HCT116 (cell line): ENCODE measurements at regions of chr7 and their contacts with region 1.

Region 1: GRCh38 chr7:65216459-65216858 is 157.2 kb upstream of the ZNF92 start:
- DNase-seq: peak; percentile 48
- ATAC-seq: peak; percentile 94
- H3K4me3 ChIP-seq: no peak overlapping the region
- H3K27ac ChIP-seq: no peak overlapping the region
- H3K4me1 ChIP-seq: no peaks in the 10 kb centered on the region
- H3K27me3 ChIP-seq: no peaks in the 10 kb centered on the region
- CTCF ChIP-seq: peak; percentile 68 to 78 (median 71)
- POLR2A ChIP-seq: no peak
- RAD21 ChIP-seq: peak; percentile 88

Region 2: GRCh38 chr7:64951250-64951848 is 265.1 kb before region 1 on chr7:
- CTCF ChIA-PET with region 1: no interaction called
- POLR2A ChIA-PET with region 1: no interaction called
- RAD21 ChIA-PET with region 1: no interaction called
- intact Hi-C with region 1: loop called (anchors 1 kb)
- DNase-seq: peak; percentile 16
- ATAC-seq: peak; percentile 62
- H3K4me3 ChIP-seq: no peak overlapping the region
- H3K27ac ChIP-seq: no peak overlapping the region
- H3K4me1 ChIP-seq: no peaks in the 10 kb centered on the region
- H3K27me3 ChIP-seq: no peaks in the 10 kb centered on the region
- CTCF ChIP-seq: peak; percentile 49 to 79 (median 73); a peak in 5 of 6 replicates
- POLR2A ChIP-seq: no peak
- RAD21 ChIP-seq: peak; percentile 82

Region 3: GRCh38 chr7:65307651-65308299 is 91.3 kb after region 1 on chr7:
- CTCF ChIA-PET with region 1: interaction called, 18 read pairs
- POLR2A ChIA-PET with region 1: no interaction called
- RAD21 ChIA-PET with region 1: interaction called, 3 to 5 read pairs
- intact Hi-C with region 1: loop called (anchors 1 kb)
- DNase-seq: peak; percentile 34
- ATAC-seq: peak; percentile 94
- H3K4me3 ChIP-seq: no peak overlapping the region
- H3K27ac ChIP-seq: no peak overlapping the region
- H3K4me1 ChIP-seq: no peaks in the 10 kb centered on the region
- H3K27me3 ChIP-seq: no peaks in the 10 kb centered on the region
- CTCF ChIP-seq: peak; percentile 72 to 87 (median 86); a peak in 5 of 6 replicates
- POLR2A ChIP-seq: no peak
- RAD21 ChIP-seq: peak; percentile 89